B cell (primary cell): ENCODE measurements at regions of chr14 and their contacts with region 1.

Region 1: DNA sequence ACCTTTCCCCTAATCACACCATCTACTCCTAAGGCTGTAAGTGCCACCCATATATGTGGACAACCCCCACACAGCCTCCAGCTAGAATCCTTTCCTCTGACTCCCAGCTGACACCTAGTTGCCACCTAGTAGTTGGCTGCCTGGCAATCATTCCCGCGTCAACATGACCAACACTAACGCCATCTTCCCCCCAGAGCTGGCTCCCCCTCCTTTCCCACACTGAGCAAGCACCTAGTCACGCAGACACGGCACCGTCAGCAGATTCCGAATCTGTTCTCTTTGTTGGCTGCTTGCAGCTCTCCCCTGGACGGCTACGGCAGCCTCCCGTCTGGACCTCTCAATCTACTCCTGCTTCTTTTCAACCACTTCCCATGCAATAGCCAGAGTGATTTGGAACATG is 27.7 kb downstream of the UBR7 start:
- DNase-seq: no peak
- ATAC-seq: no peak
- H3K4me3 ChIP-seq: no peak overlapping the region
- H3K4me3 Mint-ChIP-seq: no peak overlapping the region
- H3K27ac ChIP-seq: no peak overlapping the region
- H3K27ac Mint-ChIP-seq: no peak overlapping the region
- H3K4me1 ChIP-seq: peaks cover 4% of the 10 kb centered on the region in 2 donors
- H3K4me1 Mint-ChIP-seq: peaks cover 12% of the 10 kb centered on the region
- H3K27me3 ChIP-seq: peaks cover 0 to 9% (median 0%) of the 10 kb centered on the region in 4 experiments
- H3K27me3 Mint-ChIP-seq: peaks cover 8% of the 10 kb centered on the region
- CTCF ChIP-seq: no peak

Region 2: GRCh38 chr14:93536945-93537344 is 302.1 kb after region 1 on chr14:
- CTCF ChIA-PET with region 1: interaction called, 13 read pairs
- POLR2A ChIA-PET with region 1: no interaction called
- intact Hi-C with region 1: loop called (anchors 2 kb)
- DNase-seq: peak; percentile 12
- ATAC-seq: no peak
- H3K4me3 ChIP-seq: no peak overlapping the region
- H3K4me3 Mint-ChIP-seq: no peak overlapping the region
- H3K27ac ChIP-seq: no peak overlapping the region
- H3K27ac Mint-ChIP-seq: no peak overlapping the region
- H3K4me1 ChIP-seq: peaks cover 20 to 23% of the 10 kb centered on the region in 2 donors
- H3K4me1 Mint-ChIP-seq: peaks cover 26% of the 10 kb centered on the region
- H3K27me3 ChIP-seq: no peaks in the 10 kb centered on the region
- H3K27me3 Mint-ChIP-seq: no peaks in the 10 kb centered on the region
- CTCF ChIP-seq: peak; percentile 18

Region 3: GRCh38 chr14:93543766-93544165 is 309.0 kb after region 1 on chr14:
- CTCF ChIA-PET with region 1: interaction called, 3 read pairs
- POLR2A ChIA-PET with region 1: no interaction called
- intact Hi-C with region 1: loop called (anchors 2 kb)
- DNase-seq: peak; percentile 15
- ATAC-seq: no peak
- H3K4me3 ChIP-seq: no peak overlapping the region
- H3K4me3 Mint-ChIP-seq: no peak overlapping the region
- H3K27ac ChIP-seq: no peak overlapping the region
- H3K27ac Mint-ChIP-seq: no peak overlapping the region
- H3K4me1 ChIP-seq: peaks cover 0 to 3% of the 10 kb centered on the region in 2 donors
- H3K4me1 Mint-ChIP-seq: peaks cover 8% of the 10 kb centered on the region
- H3K27me3 ChIP-seq: peaks cover 0 to 2% (median 0%) of the 10 kb centered on the region in 4 experiments
- H3K27me3 Mint-ChIP-seq: peaks cover 4% of the 10 kb centered on the region
- CTCF ChIP-seq: peak; percentile 46